Heart right ventricle (tissue), 16 donors: ENCODE measurements at regions of chr13 and their contacts with region 1.

Region 1: DNA sequence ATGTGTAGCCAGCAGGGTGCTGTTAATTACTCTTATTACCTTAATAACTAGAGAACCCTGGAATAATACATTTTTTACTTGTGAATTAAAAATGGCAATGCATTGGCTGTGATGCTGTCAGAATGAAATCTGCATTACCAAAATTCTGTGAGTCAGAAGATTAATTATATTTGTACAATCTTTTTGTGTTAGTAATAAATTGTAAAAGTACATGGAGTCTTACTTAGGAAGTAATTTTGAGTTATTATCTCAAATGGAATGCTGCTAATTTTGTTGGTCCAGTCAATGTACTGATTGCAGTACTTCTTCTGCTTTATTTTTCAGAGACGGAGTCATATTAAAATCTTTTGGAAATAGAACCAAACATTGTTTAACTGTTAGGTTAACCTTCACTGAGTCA is 152.0 kb upstream of the SLC10A2 start:
- DNase-seq: no peak
- ATAC-seq: no peak
- H3K4me3 ChIP-seq: no peak overlapping the region
- H3K27ac ChIP-seq: no peak overlapping the region
- H3K4me1 ChIP-seq: no peaks in the 10 kb centered on the region
- H3K27me3 ChIP-seq: no peaks in the 10 kb centered on the region
- CTCF ChIP-seq: no peak

Region 2: GRCh38 chr13:103164251-103164650 is 54.0 kb before region 1 on chr13:
- intact Hi-C with region 1: no loop called
- DNase-seq: no peak
- ATAC-seq: no peak
- H3K4me3 ChIP-seq: no peak overlapping the region
- H3K27ac ChIP-seq: no peak overlapping the region
- H3K4me1 ChIP-seq: no peaks in the 10 kb centered on the region
- H3K27me3 ChIP-seq: no peaks in the 10 kb centered on the region
- CTCF ChIP-seq: no peak

Region 3: DNA sequence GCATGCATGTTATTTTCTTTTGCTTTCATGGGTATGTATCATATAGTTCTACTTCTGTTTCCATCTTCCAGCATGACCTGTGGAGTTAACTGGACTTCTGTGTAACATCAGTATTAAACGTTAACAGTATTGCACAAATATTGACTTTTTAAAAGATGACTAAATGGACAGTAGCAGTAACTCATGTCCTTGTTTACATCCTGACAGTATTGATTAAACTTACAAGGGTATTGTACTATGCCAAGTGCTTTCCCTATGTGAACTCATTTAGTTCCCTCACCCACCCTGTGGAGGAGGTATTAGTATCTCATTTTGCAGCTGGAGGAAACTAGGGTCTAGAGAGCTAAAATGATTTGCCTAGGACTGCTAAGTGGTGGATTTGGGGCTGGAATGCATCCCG is 23.4 kb before region 1 on chr13:
- intact Hi-C with region 1: loop called in 1 of 10 experiments (anchors 1 kb)
- DNase-seq: no peak
- ATAC-seq: no peak
- H3K4me3 ChIP-seq: no peak overlapping the region
- H3K27ac ChIP-seq: no peak overlapping the region
- H3K4me1 ChIP-seq: no peaks in the 10 kb centered on the region
- H3K27me3 ChIP-seq: peaks cover 0 to 5% (median 0%) of the 10 kb centered on the region in 7 donors
- CTCF ChIP-seq: no peak

Region 4: DNA sequence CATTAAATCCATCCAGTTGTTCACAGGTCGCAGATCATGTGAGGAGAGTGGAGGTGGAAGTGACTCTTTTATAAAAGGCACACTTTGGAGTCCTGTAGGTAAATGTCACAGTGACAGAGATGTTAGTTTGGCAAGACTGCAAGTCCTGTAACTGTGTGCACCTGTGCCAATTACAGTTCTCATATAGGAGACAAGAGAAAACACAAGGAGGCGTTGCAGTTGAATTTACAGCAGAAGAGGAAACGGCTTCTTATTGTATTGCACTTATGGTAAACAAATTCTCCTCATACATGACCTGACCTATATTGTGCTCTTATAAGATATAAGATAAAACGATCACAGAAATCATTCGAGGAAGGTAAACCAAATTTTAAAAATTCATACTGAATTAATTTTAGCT is 580.8 kb after region 1 on chr13:
- intact Hi-C with region 1: no loop called
- DNase-seq: no peak
- ATAC-seq: no peak
- H3K4me3 ChIP-seq: no peak overlapping the region
- H3K27ac ChIP-seq: no peak overlapping the region
- H3K4me1 ChIP-seq: no peaks in the 10 kb centered on the region
- H3K27me3 ChIP-seq: no peaks in the 10 kb centered on the region
- CTCF ChIP-seq: no peak